ENCODE measurements at regions of chr14 and their contacts with region 1.

Region 1: DNA sequence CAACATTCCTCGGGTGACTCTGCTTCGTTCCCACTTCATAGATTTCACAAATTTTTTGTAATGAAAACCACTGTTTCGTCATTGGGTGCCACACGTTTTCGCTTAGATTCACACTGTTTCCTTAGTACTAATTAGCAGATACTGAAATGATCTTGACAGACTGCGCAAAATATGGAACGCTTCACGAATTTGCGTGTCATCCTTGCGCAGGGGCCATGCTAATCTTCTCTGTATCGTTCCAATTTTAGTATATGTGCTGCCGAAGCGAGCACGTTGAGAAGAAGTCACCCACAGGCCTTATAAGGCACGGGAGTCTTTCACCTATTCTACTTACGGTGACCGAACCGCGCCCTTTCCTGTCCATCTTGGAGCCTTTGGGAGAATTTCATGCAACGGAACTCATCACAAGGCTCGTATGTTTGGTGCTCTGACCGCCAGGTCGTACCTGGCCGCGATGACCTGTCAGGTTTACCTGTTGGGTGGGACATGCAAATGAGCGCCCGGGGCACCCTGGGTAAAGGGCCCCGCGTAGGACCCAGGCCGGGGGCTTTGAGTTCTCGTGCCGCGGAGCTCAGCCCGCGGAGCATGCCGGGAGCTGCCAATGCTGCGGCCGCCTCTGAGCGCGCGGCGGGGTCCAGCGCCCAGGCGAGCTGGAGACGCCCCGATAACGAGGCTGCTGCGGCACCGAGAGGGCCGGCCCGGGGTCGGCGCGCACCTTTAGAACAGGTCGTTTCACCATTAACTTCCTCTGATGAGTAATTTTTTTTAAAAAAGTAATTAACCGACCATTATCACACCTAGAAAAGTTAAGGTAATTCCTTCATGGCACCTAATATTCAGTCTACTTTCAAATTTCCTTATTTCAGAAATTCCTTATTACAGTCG is at the start of gene RNU6-8:
- DNase-seq: peak; percentile 84 to 99 (median 90)
- ATAC-seq: peak; percentile 78 to 80
- H3K4me3 Mint-ChIP-seq: peak within 1 kb of the TSS; percentile 88 to 96 (median 95)
- H3K27ac Mint-ChIP-seq: peak within 1 kb of the TSS; percentile 99 to 100 (median 100)
- H3K4me1 Mint-ChIP-seq: peaks cover 16 to 50% (median 28%) of the 10 kb centered on the region in 4 donors
- H3K27me3 Mint-ChIP-seq: peaks cover 0 to 5% (median 0%) of the 10 kb centered on the region in 5 donors
- polyA plus RNA-seq, gene RNU6-8: not detected

Region 2: DNA sequence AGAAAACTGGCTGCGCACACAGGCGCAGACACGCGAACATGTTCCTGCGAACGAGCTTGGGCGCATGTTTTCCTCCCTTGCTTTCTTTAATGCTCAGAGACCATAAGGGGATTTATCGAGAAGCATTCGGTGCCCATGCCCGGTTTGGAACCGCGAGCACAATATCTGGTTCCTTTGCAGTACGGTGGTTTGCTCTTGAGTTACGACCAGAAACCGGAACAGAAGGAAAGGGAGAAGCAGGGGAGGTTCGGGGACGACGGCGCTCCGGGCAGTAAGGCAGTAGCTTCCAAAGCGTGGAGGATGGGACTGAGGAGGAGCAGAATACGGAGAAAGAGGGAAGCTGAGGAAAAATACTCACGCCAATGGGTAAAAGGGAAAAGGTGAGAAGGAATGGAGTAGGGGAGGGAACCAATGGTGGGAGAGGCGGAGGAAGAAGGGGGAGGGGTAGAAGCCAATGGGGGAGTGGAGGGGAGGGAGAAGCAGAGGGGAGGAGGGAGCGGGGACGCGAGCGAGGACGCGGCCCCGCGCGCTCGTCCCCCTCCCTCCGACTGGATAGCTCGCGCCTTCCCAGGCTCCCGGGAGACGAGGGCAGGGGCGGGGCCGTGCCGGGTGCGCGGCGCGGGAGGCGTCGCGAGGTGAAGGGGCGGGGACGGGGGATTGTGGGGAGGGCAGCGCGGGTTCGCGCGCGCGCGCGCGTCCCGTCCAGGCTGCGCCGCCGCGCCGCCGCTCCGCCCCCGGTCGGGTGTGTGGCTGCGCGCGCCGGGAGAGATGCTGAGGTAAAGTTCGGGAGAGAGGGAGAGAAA is 126.8 kb before region 1 on chr14:
- POLR2A ChIA-PET with region 1: interaction called, 44 read pairs
- DNase-seq: peak; percentile 60 to 84 (median 77)
- ATAC-seq: peak; percentile 43 to 55
- H3K4me3 Mint-ChIP-seq: peak overlapping the region; percentile 94 to 100 (median 98)
- H3K27ac Mint-ChIP-seq: peak overlapping the region; percentile 87 to 99 (median 96)
- H3K4me1 Mint-ChIP-seq: peaks cover 21 to 43% (median 35%) of the 10 kb centered on the region in 4 donors
- H3K27me3 Mint-ChIP-seq: no peaks in the 10 kb centered on the region